ENCODE measurements at regions of chr16 and their contacts with region 1.

Region 1: DNA sequence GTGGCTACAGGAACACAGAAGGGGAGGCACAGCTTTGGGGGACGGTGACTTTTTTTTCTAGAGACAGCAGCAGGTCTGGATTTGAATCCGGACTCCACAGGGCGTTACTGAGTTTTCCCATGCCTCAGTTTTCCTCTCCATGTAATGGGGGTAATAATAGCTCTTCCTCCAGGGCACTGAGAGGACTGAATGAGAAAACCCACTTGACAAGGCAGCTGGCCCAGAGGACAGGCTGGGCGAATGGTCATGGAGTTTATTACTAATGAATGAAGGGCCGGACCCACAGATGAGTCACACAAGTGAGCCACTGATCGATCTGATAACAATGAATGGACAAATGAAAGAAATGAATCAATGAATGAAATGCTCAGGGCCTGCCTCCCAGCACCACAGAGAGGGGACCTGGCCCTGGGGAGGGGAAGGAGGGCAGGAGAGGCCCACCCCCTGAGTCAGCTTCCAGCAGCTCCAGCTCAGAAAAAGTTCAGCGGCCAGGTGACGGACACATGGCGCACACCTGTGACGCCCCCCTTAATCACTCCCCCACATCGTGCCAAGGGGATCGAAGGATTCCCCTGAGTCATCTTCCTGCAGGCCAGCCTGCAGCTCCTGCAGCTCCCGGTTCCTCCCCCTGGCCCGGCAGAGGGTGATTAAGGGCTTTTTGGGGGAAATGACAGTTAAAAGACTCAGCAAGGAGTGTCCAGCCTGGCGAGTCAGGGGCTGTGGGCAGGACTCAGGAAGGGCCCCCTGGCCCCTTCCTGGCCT is 54.3 kb downstream of the SOCS1 start:
- DNase-seq: no peak
- H3K4me3 ChIP-seq: no peak overlapping the region
- H3K27ac ChIP-seq: no peak overlapping the region
- H3K4me1 ChIP-seq: peaks cover 12% of the 10 kb centered on the region
- CTCF ChIP-seq: no peak

Region 2: GRCh38 chr16:11273721-11274324 is 72.1 kb after region 1 on chr16:
- CTCF ChIA-PET with region 1: no interaction called
- POLR2A ChIA-PET with region 1: no interaction called
- intact Hi-C with region 1: no loop called
- DNase-seq: no peak
- H3K4me3 ChIP-seq: no peak overlapping the region
- H3K27ac ChIP-seq: no peak overlapping the region
- H3K4me1 ChIP-seq: peaks cover 2% of the 10 kb centered on the region
- CTCF ChIP-seq: no peak

Region 3: GRCh38 chr16:11996433-11997330 is 795.0 kb after region 1 on chr16:
- CTCF ChIA-PET with region 1: interaction called, 15 read pairs
- POLR2A ChIA-PET with region 1: no interaction called
- intact Hi-C with region 1: no loop called
- DNase-seq: no peak
- H3K4me3 ChIP-seq: no peak overlapping the region
- H3K27ac ChIP-seq: no peak overlapping the region
- H3K4me1 ChIP-seq: peaks cover 14% of the 10 kb centered on the region
- CTCF ChIP-seq: no peak

Measured in OCI-LY7 (cell line).